ENCODE measurements at regions of chr2 and their contacts with region 1.

Region 1: DNA sequence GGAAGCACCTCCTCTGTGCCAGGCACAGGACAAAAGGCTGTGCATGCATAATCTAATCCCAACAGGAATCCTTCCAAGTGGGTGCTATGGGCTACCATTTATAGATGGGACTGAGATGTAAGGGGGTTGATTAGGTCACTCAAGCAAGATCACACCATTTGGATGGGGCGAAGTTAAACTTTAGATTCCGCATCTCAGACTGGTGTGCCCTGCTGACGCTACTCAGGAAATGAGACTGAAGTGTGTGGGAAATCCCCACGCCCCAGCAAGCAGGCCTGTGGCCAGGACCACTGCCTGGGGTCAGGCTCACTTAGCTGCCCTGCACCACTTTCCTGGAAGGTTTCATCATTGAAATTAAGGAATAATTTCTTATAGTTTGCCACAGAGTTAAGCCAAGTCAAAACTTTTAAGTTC is 70.5 kb upstream of the PPP1CB start:
- DNase-seq: peak; percentile 62
- ATAC-seq: peak; percentile 99
- H3K4me3 ChIP-seq: no peak overlapping the region
- H3K27ac ChIP-seq: peak overlapping the region; percentile 49; the same call in 1 of the 2 replicates
- H3K4me1 ChIP-seq: peaks cover 15% of the 10 kb centered on the region
- H3K27me3 ChIP-seq: no peaks in the 10 kb centered on the region
- CTCF ChIP-seq: no peak
- EP300 ChIP-seq: no peak
- POLR2A ChIP-seq: 0 out of 2 replicates have a peak, but pooled peaks have one; percentile 21
- RAD21 ChIP-seq: no peak

Region 2: DNA sequence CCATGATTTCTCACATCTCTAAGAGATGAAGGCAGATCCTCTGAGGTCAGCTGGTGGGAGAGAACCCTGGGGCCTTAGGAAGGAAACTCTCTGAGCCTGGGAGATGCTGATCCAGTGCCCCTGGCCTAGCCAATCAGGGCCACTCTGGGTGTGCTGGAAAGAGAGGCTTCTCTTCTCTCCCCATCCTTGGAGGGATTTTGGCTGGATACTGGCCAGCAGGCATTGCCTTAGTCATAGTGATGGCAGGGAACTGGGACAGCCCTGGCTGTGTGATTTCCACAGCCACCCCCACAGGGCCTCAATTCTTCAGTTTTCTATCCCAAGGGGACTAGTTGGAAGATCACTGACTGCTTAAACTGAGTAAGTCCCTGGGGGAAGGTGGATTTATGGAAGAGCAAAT is 211.9 kb before region 1 on chr2:
- CTCF ChIA-PET with region 1: no interaction called
- POLR2A ChIA-PET with region 1: no interaction called
- RAD21 ChIA-PET with region 1: no interaction called
- SMC1A ChIA-PET with region 1: no interaction called
- in situ Hi-C with region 1: no loop called
- intact Hi-C with region 1: no loop called
- DNase-seq: no peak
- ATAC-seq: no peak
- H3K4me3 ChIP-seq: no peak overlapping the region
- H3K27ac ChIP-seq: no peak overlapping the region
- H3K4me1 ChIP-seq: no peaks in the 10 kb centered on the region
- H3K27me3 ChIP-seq: no peaks in the 10 kb centered on the region; a peak in 1 of 4 replicates
- CTCF ChIP-seq: no peak
- EP300 ChIP-seq: no peak
- POLR2A ChIP-seq: no peak
- RAD21 ChIP-seq: no peak

Region 3: DNA sequence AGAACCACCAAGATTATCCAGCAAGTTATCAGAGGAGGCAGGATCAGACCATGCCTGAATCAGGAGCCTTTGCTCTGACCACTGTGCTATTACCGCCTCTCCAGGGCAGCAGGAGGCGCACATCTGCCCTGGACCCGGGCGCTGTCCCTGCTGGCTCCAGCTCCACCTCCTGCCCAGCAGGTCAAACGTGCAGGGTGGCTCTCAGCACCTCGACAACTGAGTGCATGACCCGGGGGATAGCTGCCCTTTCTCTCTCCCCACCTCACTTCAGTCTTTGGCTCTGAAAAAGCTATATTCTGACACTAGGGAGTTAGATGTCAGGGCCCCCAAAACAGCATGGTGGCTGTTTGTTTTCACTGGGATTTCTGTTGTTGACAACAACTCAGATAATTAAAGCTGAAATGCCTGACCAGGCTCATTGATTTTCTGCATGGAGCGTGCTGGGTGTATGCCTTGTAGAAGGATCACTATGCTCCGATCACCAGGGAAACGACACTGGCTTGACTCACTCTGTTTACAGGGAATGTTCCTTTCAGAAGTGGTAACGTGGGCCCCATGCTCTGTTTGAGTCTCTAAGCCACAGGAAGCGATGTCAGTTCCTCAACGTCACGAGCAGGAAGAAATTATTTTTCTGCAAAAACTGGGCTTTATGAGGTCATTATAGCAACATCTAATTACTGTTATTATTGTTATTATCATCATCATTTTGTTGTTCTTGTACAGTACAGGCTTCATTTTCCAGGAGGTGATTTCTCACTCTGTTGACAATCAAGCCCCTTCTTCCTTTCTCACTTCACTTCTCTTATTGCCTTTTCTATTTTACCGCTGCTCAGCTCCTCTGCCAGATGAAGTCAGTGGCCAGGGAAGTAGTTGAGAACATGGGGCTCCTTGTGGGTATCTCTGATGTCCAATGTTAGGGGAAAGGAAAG is 59.7 kb before region 1 on chr2:
- CTCF ChIA-PET with region 1: no interaction called
- POLR2A ChIA-PET with region 1: no interaction called
- RAD21 ChIA-PET with region 1: no interaction called
- SMC1A ChIA-PET with region 1: no interaction called
- in situ Hi-C with region 1: no loop called
- intact Hi-C with region 1: no loop called
- DNase-seq: no peak
- ATAC-seq: peak; percentile 75
- H3K4me3 ChIP-seq: no peak overlapping the region
- H3K27ac ChIP-seq: no peak overlapping the region
- H3K4me1 ChIP-seq: peaks cover 21% of the 10 kb centered on the region
- H3K27me3 ChIP-seq: no peaks in the 10 kb centered on the region; a peak in 1 of 4 replicates
- CTCF ChIP-seq: peak; percentile 26 to 32 (median 28); a peak in 4 of 6 replicates
- EP300 ChIP-seq: no peak
- POLR2A ChIP-seq: no peak
- RAD21 ChIP-seq: peak; percentile 49

Region 4: DNA sequence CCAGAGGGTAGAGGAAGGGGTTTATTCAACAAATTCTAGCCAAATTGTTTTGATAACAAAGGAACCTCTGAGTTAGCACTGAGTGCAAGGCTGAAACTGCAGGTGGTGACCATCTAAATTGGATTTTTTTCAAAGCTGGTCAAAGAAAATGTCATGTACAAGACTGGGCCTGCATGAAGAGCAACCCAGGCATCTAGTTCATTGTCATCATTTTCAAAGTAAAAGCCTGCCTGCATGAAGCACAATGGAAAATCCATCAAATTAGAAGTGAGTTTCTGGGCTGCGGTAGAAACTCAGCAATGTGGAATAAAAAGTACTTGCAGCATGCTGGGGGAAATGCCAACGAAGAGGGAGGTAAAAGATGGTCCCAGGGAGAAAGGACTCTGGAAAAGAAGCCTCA is 10.3 kb before region 1 on chr2:
- CTCF ChIA-PET with region 1: no interaction called
- POLR2A ChIA-PET with region 1: no interaction called
- RAD21 ChIA-PET with region 1: no interaction called
- SMC1A ChIA-PET with region 1: interaction called, 10 read pairs
- in situ Hi-C with region 1: no loop called
- intact Hi-C with region 1: no loop called
- DNase-seq: no peak
- ATAC-seq: no peak
- H3K4me3 ChIP-seq: no peak overlapping the region
- H3K27ac ChIP-seq: no peak overlapping the region
- H3K4me1 ChIP-seq: no peaks in the 10 kb centered on the region
- H3K27me3 ChIP-seq: peaks cover 0 to 1% of the 10 kb centered on the region in 2 experiments; a peak in 1 of 4 replicates
- CTCF ChIP-seq: no peak
- EP300 ChIP-seq: no peak
- POLR2A ChIP-seq: no peak
- RAD21 ChIP-seq: no peak

Measured in GM12878 (cell line).